B cell (primary cell): ENCODE measurements at regions of chr13 and their contacts with region 1.

Region 1: GRCh38 chr13:31424117-31424729 is 224.4 kb downstream of the B3GLCT start:
- DNase-seq: peak; percentile 65
- ATAC-seq: peak; percentile 78
- H3K4me3 ChIP-seq: no peak overlapping the region
- H3K4me3 Mint-ChIP-seq: no peak overlapping the region
- H3K27ac ChIP-seq: no peak overlapping the region
- H3K27ac Mint-ChIP-seq: no peak overlapping the region
- H3K4me1 ChIP-seq: peaks cover 0 to 3% of the 10 kb centered on the region in 2 donors
- H3K4me1 Mint-ChIP-seq: peaks cover 4% of the 10 kb centered on the region
- H3K27me3 ChIP-seq: peaks cover 0 to 2% (median 0%) of the 10 kb centered on the region in 4 experiments
- H3K27me3 Mint-ChIP-seq: peaks cover 3% of the 10 kb centered on the region
- CTCF ChIP-seq: peak; percentile 80

Region 2: DNA sequence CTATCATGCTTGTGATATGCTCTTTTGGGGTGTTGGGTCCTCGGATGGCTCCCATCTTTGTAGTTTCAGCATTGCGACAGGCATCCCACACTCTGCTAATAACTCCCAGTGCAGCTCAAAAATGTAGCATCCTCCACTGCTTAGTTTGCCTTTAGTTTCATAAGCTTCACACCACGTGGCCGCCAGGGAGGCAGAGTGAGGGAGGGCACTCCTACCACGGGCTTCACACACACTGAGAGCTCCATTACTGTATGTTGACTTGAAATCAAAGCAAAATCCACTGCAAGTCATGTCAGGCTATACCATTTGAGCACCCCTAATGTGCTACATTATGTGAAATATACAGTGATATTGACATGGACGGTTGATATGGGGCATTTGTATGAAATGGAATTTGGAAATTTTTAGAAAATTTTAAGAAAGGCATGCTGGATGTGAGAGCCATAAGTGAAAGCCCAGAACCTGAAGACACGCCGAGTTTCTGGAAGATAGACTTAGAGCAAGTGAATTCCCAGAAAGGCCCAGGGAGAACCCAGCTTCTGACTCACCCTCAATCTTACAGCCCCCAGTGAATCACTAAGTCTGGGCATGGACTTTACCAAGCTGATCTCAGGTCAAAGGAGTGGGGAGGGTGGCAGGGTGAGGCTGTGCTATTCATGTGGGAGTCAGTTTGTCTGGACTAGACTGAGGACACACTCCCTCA is 356.7 kb before region 1 on chr13:
- CTCF ChIA-PET with region 1: no interaction called
- POLR2A ChIA-PET with region 1: no interaction called
- intact Hi-C with region 1: no loop called
- DNase-seq: no peak
- ATAC-seq: no peak
- H3K4me3 ChIP-seq: no peak overlapping the region
- H3K4me3 Mint-ChIP-seq: no peak overlapping the region
- H3K27ac ChIP-seq: no peak overlapping the region
- H3K27ac Mint-ChIP-seq: no peak overlapping the region
- H3K4me1 ChIP-seq: no peaks in the 10 kb centered on the region
- H3K4me1 Mint-ChIP-seq: no peaks in the 10 kb centered on the region
- H3K27me3 ChIP-seq: peaks cover 0 to 2% (median 0%) of the 10 kb centered on the region in 4 experiments
- H3K27me3 Mint-ChIP-seq: peaks cover 7% of the 10 kb centered on the region
- CTCF ChIP-seq: no peak

Region 3: DNA sequence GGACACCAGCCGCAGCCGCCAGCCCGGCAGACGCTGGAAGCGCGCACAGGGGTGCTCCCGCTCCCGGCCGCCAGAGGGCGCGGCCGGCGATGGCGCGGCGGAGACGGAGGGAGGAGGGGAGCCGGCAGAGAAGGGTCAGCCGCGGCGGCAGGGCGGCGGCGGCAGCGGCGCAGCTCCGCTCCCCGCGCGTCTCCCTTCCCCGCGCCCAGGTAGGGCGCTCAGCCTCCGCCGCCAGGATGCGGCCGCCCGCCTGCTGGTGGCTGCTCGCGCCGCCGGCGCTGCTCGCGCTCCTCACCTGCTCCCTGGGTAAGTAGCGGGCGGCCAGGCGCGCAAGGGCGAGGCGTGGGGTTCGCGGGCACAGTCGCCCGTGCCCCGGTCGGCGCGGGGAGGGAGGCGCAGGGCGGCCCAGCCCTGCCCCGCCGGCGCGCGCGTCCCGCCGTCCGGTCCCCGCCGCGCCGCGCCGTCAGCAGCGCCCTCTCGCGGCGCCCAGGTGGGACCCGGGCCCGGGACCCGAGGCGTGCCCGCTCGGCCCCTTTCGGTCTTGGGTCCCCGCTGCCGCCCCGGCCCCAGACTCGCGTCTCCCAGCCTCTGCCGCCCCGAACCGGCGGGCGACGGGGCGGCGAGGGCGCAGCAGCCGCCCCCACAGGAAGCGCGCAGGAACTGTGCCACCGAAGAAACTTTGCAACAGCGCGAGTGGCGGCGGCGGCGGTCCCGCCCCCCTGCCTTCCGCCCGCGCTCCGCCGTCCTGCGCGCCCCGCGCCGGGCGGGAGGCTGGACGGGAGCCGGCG is 224.2 kb before region 1 on chr13 and contains the start of gene B3GLCT:
- CTCF ChIA-PET with region 1: no interaction called
- POLR2A ChIA-PET with region 1: no interaction called
- intact Hi-C with region 1: loop called (anchors 1 kb)
- DNase-seq: peak; percentile 91
- ATAC-seq: peak; percentile 74
- H3K4me3 ChIP-seq: peak within 1 kb of the TSS; percentile 59 to 77 (median 71)
- H3K4me3 Mint-ChIP-seq: peak within 1 kb of the TSS; percentile 88
- H3K27ac ChIP-seq: peak within 1 kb of the TSS; percentile 80 to 89
- H3K27ac Mint-ChIP-seq: peak within 1 kb of the TSS; percentile 87
- H3K4me1 ChIP-seq: peaks cover 8 to 18% of the 10 kb centered on the region in 2 donors
- H3K4me1 Mint-ChIP-seq: peaks cover 18% of the 10 kb centered on the region
- H3K27me3 ChIP-seq: no peaks in the 10 kb centered on the region
- H3K27me3 Mint-ChIP-seq: no peaks in the 10 kb centered on the region
- CTCF ChIP-seq: peak; percentile 92
- total RNA-seq, gene B3GLCT: 6.2 and 6.8 TPM in 2 replicates

Region 4: DNA sequence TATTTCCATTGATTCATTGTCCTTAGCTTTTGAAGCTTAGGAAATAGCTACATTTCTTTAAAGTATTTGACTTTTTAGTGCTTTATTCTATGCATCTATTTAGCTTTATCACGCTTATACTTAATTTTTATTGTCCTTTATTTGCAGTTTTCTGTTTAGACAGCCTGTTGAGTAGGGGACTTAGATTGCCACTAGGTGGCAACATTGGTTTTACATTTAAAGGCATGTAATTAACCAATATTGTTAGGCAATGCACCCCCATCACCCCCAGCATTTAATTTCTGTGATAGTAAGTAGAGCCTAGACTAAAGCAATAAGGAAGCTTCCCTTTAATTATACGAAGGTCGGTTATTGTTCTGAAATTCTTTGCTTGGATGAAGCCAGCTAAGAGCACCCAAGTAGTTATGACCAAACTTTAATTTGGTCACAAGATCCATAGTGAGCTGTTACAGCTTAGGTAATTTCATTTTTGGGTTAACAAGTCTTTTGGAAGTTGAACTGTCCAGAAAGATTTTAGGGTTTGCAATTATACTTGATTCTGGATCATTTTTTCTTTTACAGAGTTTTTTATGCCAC is 187.9 kb before region 1 on chr13:
- CTCF ChIA-PET with region 1: interaction called, 103 read pairs
- POLR2A ChIA-PET with region 1: no interaction called
- intact Hi-C with region 1: no loop called
- DNase-seq: peak; percentile 48
- ATAC-seq: no peak
- H3K4me3 ChIP-seq: no peak overlapping the region
- H3K4me3 Mint-ChIP-seq: no peak overlapping the region
- H3K27ac ChIP-seq: no peak overlapping the region
- H3K27ac Mint-ChIP-seq: no peak overlapping the region
- H3K4me1 ChIP-seq: no peaks in the 10 kb centered on the region
- H3K4me1 Mint-ChIP-seq: peaks cover 1% of the 10 kb centered on the region
- H3K27me3 ChIP-seq: no peaks in the 10 kb centered on the region
- H3K27me3 Mint-ChIP-seq: no peaks in the 10 kb centered on the region
- CTCF ChIP-seq: peak; percentile 75

Region 5: GRCh38 chr13:31409678-31410356 is 14.4 kb before region 1 on chr13:
- CTCF ChIA-PET with region 1: interaction called, 11 read pairs
- POLR2A ChIA-PET with region 1: no interaction called
- intact Hi-C with region 1: no loop called
- DNase-seq: peak; percentile 15
- ATAC-seq: no peak
- H3K4me3 ChIP-seq: no peak overlapping the region
- H3K4me3 Mint-ChIP-seq: no peak overlapping the region
- H3K27ac ChIP-seq: no peak overlapping the region
- H3K27ac Mint-ChIP-seq: no peak overlapping the region
- H3K4me1 ChIP-seq: no peaks in the 10 kb centered on the region
- H3K4me1 Mint-ChIP-seq: peaks cover 4% of the 10 kb centered on the region
- H3K27me3 ChIP-seq: no peaks in the 10 kb centered on the region
- H3K27me3 Mint-ChIP-seq: no peaks in the 10 kb centered on the region
- CTCF ChIP-seq: no peak

Region 6: GRCh38 chr13:31638577-31638976 is 214.4 kb after region 1 on chr13:
- CTCF ChIA-PET with region 1: no interaction called
- POLR2A ChIA-PET with region 1: no interaction called
- intact Hi-C with region 1: no loop called
- DNase-seq: no peak
- ATAC-seq: no peak
- H3K4me3 ChIP-seq: no peak overlapping the region
- H3K4me3 Mint-ChIP-seq: no peak overlapping the region
- H3K27ac ChIP-seq: no peak overlapping the region
- H3K27ac Mint-ChIP-seq: no peak overlapping the region
- H3K4me1 ChIP-seq: no peaks in the 10 kb centered on the region
- H3K4me1 Mint-ChIP-seq: no peaks in the 10 kb centered on the region
- H3K27me3 ChIP-seq: no peaks in the 10 kb centered on the region
- H3K27me3 Mint-ChIP-seq: peaks cover 3% of the 10 kb centered on the region
- CTCF ChIP-seq: no peak